Body of pancreas (tissue), 4 donors: ENCODE measurements at regions of chr7 and their contacts with region 1.

Region 1: GRCh38 chr7:50782384-50783208 is at the start of gene GRB10:
- DNase-seq: peak; percentile 57 to 72 (median 69)
- ATAC-seq: peak; percentile 69
- H3K4me3 ChIP-seq: peak within 1 kb of the TSS in 1 of 2 donors; percentile 38
- H3K27ac ChIP-seq: peak within 1 kb of the TSS; percentile 17 to 70 (median 67)
- H3K4me1 ChIP-seq: peaks cover 91% of the 10 kb centered on the region
- H3K27me3 ChIP-seq: no peaks in the 10 kb centered on the region
- CTCF ChIP-seq: peak in 3 of 7 experiments; percentile 27 to 49 (median 40)
- POLR2A ChIP-seq: peak in 2 of 3 donors; percentile 19 to 25
- total RNA-seq, gene GRB10: 130 to 229 TPM

Region 2: DNA sequence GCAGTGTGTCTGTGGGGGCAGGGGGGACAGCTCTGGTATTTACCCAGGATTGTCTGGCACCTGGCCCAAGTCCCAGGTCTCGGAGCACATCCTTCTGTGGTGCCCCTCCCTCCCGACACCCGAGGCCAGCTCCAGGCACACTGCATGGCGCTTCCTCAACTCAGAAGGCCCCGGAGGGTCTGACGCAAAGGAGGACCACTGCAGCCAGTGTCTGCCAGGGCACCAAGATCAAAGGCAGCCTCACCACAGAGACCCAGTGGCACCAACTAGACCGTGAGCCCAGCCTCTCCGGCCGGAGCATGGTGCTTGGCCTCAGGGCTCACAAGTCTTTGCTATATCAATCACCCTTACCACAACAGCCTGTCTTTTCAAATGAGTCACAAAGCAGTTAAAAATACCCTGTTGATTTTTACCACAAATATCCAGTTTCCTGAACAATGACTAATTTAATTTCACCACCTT is 118.1 kb before region 1 on chr7:
- intact Hi-C with region 1: no loop called
- DNase-seq: no peak
- ATAC-seq: no peak
- H3K4me3 ChIP-seq: no peak overlapping the region
- H3K27ac ChIP-seq: peak overlapping the region in 2 of 4 donors; percentile 10 to 27
- H3K4me1 ChIP-seq: peaks cover 59% of the 10 kb centered on the region
- H3K27me3 ChIP-seq: no peaks in the 10 kb centered on the region
- CTCF ChIP-seq: no peak
- POLR2A ChIP-seq: no peak

Region 3: GRCh38 chr7:50728184-50728583 is 54.4 kb before region 1 on chr7:
- intact Hi-C with region 1: loop called (anchors 5 kb)
- DNase-seq: no peak
- ATAC-seq: peak; percentile 70
- H3K4me3 ChIP-seq: no peak overlapping the region
- H3K27ac ChIP-seq: peak overlapping the region in 3 of 4 donors; percentile 18 to 69 (median 52)
- H3K4me1 ChIP-seq: peaks cover 94% of the 10 kb centered on the region
- H3K27me3 ChIP-seq: no peaks in the 10 kb centered on the region
- CTCF ChIP-seq: no peak
- POLR2A ChIP-seq: no peak

Region 4: GRCh38 chr7:51141451-51142003 is 358.9 kb after region 1 on chr7:
- intact Hi-C with region 1: loop called (anchors 10 kb)
- DNase-seq: peak in 2 of 4 donors; percentile 35 to 38
- ATAC-seq: peak; percentile 41
- H3K4me3 ChIP-seq: no peak overlapping the region
- H3K27ac ChIP-seq: peak overlapping the region in 3 of 4 donors; percentile 19 to 69 (median 66)
- H3K4me1 ChIP-seq: peaks cover 47% of the 10 kb centered on the region
- H3K27me3 ChIP-seq: no peaks in the 10 kb centered on the region
- CTCF ChIP-seq: peak; percentile 25 to 80 (median 69)
- POLR2A ChIP-seq: no peak